ENCODE measurements at regions of chr7 and their contacts with region 1.

Region 1: DNA sequence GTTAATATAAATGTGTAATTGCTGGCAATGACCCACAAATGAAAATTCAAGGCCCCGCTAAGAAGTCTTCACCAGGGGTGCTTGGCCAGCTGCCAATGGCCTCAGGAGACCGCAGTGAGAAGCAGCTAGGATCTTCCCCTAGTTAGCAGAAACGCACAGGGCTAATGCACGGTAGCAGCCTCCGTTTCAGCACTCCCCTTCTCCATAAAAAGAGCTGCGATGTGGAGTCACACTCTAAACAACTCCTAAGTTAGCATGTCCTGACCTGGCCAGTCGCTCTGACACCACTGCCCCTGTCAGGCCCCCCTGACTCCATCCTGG is 139.0 kb downstream of the SEPTIN14 start:
- DNase-seq: no peak
- H3K4me3 Mint-ChIP-seq: no peak overlapping the region
- H3K27ac Mint-ChIP-seq: no peak overlapping the region
- H3K4me1 Mint-ChIP-seq: no peaks in the 10 kb centered on the region
- H3K27me3 Mint-ChIP-seq: peaks cover 2% of the 10 kb centered on the region

Region 2: DNA sequence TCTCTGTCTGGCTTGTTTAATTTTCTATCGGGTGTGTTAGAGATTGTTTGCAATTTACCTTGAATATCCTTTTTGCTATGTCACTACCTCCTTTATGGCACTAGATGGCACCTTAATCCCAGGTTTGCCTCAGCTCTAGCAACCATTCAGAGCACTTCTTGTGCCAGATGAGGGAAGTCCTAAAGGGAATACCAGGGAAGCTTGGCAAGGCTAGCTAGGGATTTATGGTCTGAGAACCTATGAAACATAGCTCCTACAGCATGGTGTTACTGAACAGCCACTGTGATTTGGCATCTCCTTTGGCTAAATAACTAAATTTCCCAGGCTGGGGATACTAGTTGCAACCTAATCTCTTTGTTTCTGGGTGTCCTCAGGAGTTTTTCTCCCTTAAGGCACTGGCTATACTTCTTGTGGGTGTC is 82.3 kb before region 1 on chr7:
- CTCF ChIA-PET with region 1: interaction called, 11 read pairs
- POLR2A ChIA-PET with region 1: no interaction called
- DNase-seq: peak; percentile 35
- H3K4me3 Mint-ChIP-seq: no peak overlapping the region
- H3K27ac Mint-ChIP-seq: no peak overlapping the region
- H3K4me1 Mint-ChIP-seq: peaks cover 12% of the 10 kb centered on the region
- H3K27me3 Mint-ChIP-seq: peaks cover 6% of the 10 kb centered on the region

Measured in activated CD4-positive, alpha-beta memory T cell treated with anti-CD3 and anti-CD28 coated beads, Interleukin-2, amount 10 ng/mL, durations not matched to agents 7 days and 5 days (primary cell).